Activated B cell treated with CpG ODN at 0.5 μM for 24 hours (primary cell): ENCODE measurements at regions of chr1 and their contacts with region 1.

Region 1: GRCh38 chr1:32072622-32073298 is at the start of gene TMEM39B:
- DNase-seq: peak; percentile 92
- ATAC-seq: peak; percentile 82
- H3K4me3 Mint-ChIP-seq: peak within 1 kb of the TSS; percentile 93
- H3K27ac Mint-ChIP-seq: peak within 1 kb of the TSS; percentile 95
- H3K4me1 Mint-ChIP-seq: peaks cover 35% of the 10 kb centered on the region
- H3K27me3 Mint-ChIP-seq: no peaks in the 10 kb centered on the region
- CTCF ChIP-seq: no peak
- total RNA-seq, gene TMEM39B: 23.1 and 23.8 TPM in 2 replicates

Region 2: GRCh38 chr1:31745096-31745945 is 327.4 kb before region 1 on chr1:
- CTCF ChIA-PET with region 1: no interaction called
- POLR2A ChIA-PET with region 1: no interaction called
- intact Hi-C with region 1: no loop called
- DNase-seq: no peak
- ATAC-seq: peak; percentile 64
- H3K4me3 Mint-ChIP-seq: no peak overlapping the region
- H3K27ac Mint-ChIP-seq: no peak overlapping the region
- H3K4me1 Mint-ChIP-seq: peaks cover 37% of the 10 kb centered on the region
- H3K27me3 Mint-ChIP-seq: peaks cover 4% of the 10 kb centered on the region
- CTCF ChIP-seq: no peak

Region 3: DNA sequence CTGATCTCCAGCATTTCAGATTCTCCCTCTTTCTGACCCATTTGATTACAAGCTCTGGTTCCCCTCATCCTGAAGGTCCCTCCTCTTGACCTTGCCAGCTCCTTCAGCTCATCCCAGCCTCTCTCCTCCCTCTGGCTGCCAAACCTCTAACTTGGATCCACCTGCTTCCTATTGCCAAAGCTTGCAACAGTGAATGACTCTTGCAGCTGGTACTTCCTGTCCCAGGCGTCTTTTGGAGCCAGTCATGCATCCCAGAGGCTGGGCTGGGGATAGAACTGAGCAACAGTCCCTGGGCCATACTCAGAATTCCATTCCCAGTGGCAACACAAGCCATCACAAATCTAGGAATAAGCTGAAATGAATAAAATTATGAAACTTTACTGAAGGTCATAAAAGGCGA is 229.3 kb before region 1 on chr1:
- CTCF ChIA-PET with region 1: no interaction called
- POLR2A ChIA-PET with region 1: no interaction called
- intact Hi-C with region 1: no loop called
- DNase-seq: no peak
- ATAC-seq: no peak
- H3K4me3 Mint-ChIP-seq: no peak overlapping the region
- H3K27ac Mint-ChIP-seq: no peak overlapping the region
- H3K4me1 Mint-ChIP-seq: peaks cover 26% of the 10 kb centered on the region
- H3K27me3 Mint-ChIP-seq: no peaks in the 10 kb centered on the region
- CTCF ChIP-seq: no peak

Region 4: DNA sequence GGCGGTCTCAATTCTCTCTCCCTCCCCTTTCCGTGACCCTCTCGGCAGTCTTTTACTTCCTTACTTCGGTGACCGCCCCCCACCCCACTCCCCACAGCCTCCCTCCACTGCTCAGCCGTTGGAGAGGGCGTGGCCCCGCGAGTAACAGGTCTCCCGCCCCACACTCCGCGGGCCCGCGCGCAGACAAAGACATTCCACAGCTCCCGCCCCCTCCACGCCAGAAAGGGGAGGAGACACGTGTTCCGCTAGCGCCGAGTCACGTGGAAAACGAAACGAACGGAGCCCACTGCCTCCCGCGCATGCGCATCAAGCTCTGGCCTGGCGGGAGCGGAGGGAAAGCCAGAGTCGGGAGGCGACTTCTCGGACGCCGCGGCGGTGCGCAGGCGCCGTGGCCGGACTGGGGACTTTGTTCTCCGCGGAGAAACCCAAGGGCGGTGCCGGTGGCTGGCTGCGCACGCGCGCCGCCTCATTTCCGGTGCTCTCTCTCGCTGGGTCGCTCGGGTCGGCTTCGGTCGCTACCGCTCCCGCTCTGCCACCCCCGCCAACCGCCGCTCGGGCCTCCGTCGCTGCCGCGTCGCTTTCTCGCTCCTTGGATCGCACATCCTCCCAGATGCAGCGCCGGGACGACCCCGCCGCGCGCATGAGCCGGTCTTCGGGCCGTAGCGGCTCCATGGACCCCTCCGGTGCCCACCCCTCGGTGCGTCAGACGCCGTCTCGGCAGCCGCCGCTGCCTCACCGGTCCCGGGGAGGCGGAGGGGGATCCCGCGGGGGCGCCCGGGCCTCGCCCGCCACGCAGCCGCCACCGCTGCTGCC is 59.2 kb before region 1 on chr1 and contains the start of gene KHDRBS1:
- CTCF ChIA-PET with region 1: no interaction called
- POLR2A ChIA-PET with region 1: interaction called, 26 read pairs
- intact Hi-C with region 1: loop called (anchors 1 kb)
- DNase-seq: peak; percentile 97
- ATAC-seq: peak; percentile 85
- H3K4me3 Mint-ChIP-seq: peak within 1 kb of the TSS; percentile 98
- H3K27ac Mint-ChIP-seq: peak within 1 kb of the TSS; percentile 91
- H3K4me1 Mint-ChIP-seq: peaks cover 39% of the 10 kb centered on the region
- H3K27me3 Mint-ChIP-seq: no peaks in the 10 kb centered on the region
- CTCF ChIP-seq: no peak
- total RNA-seq, gene KHDRBS1: 146 and 152 TPM in 2 replicates

Region 5: DNA sequence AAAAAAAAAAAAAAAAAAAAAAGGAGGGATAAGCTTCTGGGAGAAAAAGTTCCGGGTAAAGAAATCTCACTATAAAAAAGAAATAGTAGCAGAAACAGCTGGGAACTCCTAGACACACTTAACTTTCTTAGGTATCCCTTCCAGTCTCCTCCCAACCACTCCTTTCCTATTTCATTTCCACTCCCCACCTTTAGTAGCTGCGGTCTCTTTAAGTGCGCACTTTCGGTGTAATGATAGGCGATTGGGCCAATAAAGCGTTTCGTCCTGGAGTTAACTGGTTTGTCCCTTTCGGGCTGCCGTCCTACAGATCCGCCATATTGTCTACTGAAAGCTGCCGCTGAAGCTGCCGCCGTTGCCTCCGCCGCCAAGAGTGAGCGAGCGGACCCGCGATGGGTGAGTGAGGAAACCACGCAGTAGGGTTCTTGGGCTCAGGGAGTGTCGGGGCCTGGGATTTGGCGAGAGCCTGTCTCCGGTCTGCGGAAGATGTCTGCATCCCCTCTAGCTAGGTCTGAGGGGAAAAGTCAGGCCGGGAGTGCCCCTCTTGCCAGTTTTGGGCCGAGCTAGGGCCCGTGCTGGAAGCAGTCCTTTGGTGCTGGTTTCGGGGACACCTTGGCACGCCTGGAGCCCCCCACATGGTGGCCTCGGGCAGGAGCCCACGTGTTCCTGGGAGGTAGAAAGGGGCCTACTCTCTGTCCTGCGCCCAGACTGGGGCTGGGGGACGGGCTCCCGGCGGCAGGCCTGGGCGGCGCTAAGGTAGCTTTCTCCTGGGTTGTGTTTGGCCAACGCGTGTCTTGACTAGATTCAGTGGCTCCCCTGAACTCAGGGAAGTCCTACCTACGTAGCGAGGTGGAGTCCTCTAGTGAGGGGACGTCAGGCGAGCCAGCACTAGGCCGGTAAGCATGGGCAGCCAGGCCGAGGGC is 35.2 kb after region 1 on chr1 and contains the start of gene KPNA6:
- CTCF ChIA-PET with region 1: interaction called, 18 read pairs
- POLR2A ChIA-PET with region 1: interaction called, 72 read pairs
- intact Hi-C with region 1: loop called (anchors 1 kb)
- DNase-seq: peak; percentile 78
- ATAC-seq: peak; percentile 83
- H3K4me3 Mint-ChIP-seq: peak within 1 kb of the TSS; percentile 99
- H3K27ac Mint-ChIP-seq: peak within 1 kb of the TSS; percentile 98
- H3K4me1 Mint-ChIP-seq: peaks cover 48% of the 10 kb centered on the region
- H3K27me3 Mint-ChIP-seq: no peaks in the 10 kb centered on the region
- CTCF ChIP-seq: no peak
- total RNA-seq, gene KPNA6: 58.7 and 60.3 TPM in 2 replicates

Region 6: GRCh38 chr1:32200226-32201010 is 127.7 kb after region 1 on chr1 and contains the start of gene CCDC28B:
- CTCF ChIA-PET with region 1: no interaction called
- POLR2A ChIA-PET with region 1: interaction called, 13 read pairs
- intact Hi-C with region 1: loop called (anchors 1 kb)
- DNase-seq: peak; percentile 62
- ATAC-seq: peak; percentile 51
- H3K4me3 Mint-ChIP-seq: peak within 1 kb of the TSS; percentile 87
- H3K27ac Mint-ChIP-seq: peak within 1 kb of the TSS; percentile 87
- H3K4me1 Mint-ChIP-seq: peaks cover 49% of the 10 kb centered on the region
- H3K27me3 Mint-ChIP-seq: no peaks in the 10 kb centered on the region
- CTCF ChIP-seq: no peak
- total RNA-seq, gene CCDC28B: 50.4 and 56.9 TPM in 2 replicates

Region 7: GRCh38 chr1:32247983-32248889 is 175.5 kb after region 1 on chr1:
- CTCF ChIA-PET with region 1: no interaction called
- POLR2A ChIA-PET with region 1: interaction called, 11 read pairs
- intact Hi-C with region 1: loop called (anchors 2 kb)
- DNase-seq: peak; percentile 71
- ATAC-seq: peak; percentile 13
- H3K4me3 Mint-ChIP-seq: peak overlapping the region; percentile 45
- H3K27ac Mint-ChIP-seq: peak overlapping the region; percentile 81
- H3K4me1 Mint-ChIP-seq: peaks cover 70% of the 10 kb centered on the region
- H3K27me3 Mint-ChIP-seq: no peaks in the 10 kb centered on the region
- CTCF ChIP-seq: no peak

Region 8: DNA sequence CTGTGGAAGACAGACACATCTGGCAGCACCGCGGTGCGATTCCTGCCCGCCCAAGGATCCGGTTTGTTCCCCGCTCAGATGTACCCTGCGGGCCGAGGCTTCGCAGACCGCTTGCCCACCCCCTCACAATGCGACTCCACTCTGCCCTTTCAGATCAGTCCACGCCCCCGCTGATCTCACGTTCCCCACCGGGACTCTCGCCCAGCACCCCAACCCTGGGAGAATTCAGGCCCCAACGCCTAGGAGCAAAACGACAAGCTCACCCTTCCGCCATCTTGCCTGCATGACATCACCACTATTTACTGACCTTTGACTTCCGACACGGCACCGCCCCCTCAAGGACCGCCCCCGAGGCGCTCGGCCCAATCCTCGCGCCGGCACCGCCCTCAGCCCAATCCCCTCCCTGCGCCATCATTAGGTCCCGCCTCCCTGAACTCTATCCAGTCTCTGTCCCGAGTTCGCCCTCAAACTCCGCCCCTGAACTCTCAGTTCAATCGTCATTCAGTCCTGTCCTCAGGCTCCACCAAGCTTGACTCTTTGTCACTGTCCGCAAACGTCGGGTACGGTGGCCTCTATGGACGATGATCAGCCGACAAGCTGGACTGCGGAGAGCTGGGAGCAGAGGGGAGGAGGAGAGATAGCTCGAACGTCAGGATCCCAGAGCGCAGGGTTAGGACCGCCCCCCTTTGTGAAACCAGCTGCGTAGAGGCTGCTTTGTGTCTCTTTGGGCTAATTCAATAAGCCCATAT is 321.6 kb after region 1 on chr1 and contains the start of gene BSDC1:
- CTCF ChIA-PET with region 1: interaction called, 3 read pairs
- POLR2A ChIA-PET with region 1: interaction called, 4 read pairs
- intact Hi-C with region 1: loop called (anchors 1 kb)
- DNase-seq: peak; percentile 97
- ATAC-seq: peak; percentile 99
- H3K4me3 Mint-ChIP-seq: peak within 1 kb of the TSS; percentile 100
- H3K27ac Mint-ChIP-seq: peak within 1 kb of the TSS; percentile 98
- H3K4me1 Mint-ChIP-seq: peaks cover 27% of the 10 kb centered on the region
- H3K27me3 Mint-ChIP-seq: no peaks in the 10 kb centered on the region
- CTCF ChIP-seq: no peak
- total RNA-seq, gene BSDC1: 51.8 and 72.2 TPM in 2 replicates